K562 (cell line): ENCODE measurements at regions of chr19 and their contacts with region 1.

Region 1: DNA sequence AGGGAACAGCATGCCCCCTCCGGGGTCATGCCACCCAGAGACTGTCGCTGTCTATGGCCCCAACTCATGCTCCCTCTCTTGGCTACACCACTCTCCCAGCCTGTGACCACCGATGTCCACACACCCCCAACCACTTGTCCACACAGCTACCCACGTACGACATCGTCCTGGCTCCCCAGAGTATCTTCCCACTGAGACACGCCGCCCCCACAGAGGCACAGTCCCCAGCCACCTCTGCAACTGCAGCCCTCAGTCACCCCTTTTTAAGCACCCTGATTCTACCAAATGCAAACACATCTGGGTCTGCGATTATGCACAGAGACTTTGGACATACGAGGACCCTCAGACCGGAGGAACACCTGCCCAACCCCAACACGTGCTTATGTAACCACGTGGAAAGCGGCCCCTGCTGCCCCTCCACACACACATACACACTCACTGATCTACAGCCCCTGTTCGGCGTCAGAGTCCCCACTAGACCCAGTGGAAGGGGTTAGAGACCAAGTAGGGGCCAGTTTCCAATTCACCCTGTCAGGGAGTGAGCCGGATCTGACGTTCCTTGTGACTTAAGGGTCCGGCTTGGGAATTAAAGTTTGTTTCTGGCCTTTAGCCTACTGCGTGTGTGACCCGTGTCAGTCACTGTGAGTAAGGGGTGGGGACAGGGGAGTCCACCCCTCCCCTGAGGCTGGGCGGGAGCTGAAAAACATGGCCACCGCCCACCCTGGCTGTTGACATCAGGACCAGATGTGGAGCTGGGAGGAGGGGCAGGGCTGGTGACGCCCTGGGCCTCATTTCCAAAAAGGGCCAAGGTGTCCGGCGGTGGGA is 11.9 kb upstream of the AXL start:
- DNase-seq: peak; percentile 77 to 86 (median 84)
- ATAC-seq: peak; percentile 92
- H3K4me3 ChIP-seq: no peak overlapping the region
- H3K27ac ChIP-seq: peak overlapping the region; percentile 52
- H3K4me1 ChIP-seq: peaks cover 10 to 15% of the 10 kb centered on the region in 2 experiments; a peak in 4 of 5 replicates
- H3K27me3 ChIP-seq: peaks cover 0 to 4% of the 10 kb centered on the region in 2 experiments; a peak in 2 of 5 replicates
- CTCF ChIP-seq: no peak
- EP300 ChIP-seq: no peak
- POLR2A ChIP-seq: no peak; the same call in 1 of the 2 replicates
- RAD21 ChIP-seq: no peak

Region 2: GRCh38 chr19:41175801-41176777 is 31.0 kb before region 1 on chr19:
- CTCF ChIA-PET with region 1: no interaction called
- POLR2A ChIA-PET with region 1: no interaction called
- in situ Hi-C with region 1: no loop called
- intact Hi-C with region 1: no loop called
- DNase-seq: no peak
- ATAC-seq: no peak
- H3K4me3 ChIP-seq: no peak overlapping the region
- H3K27ac ChIP-seq: no peak overlapping the region
- H3K4me1 ChIP-seq: no peaks in the 10 kb centered on the region; a peak in 1 of 5 replicates
- H3K27me3 ChIP-seq: peaks cover 4 to 21% of the 10 kb centered on the region in 2 experiments; a peak in 4 of 5 replicates
- CTCF ChIP-seq: no peak
- EP300 ChIP-seq: no peak
- POLR2A ChIP-seq: no peak
- RAD21 ChIP-seq: no peak

Region 3: GRCh38 chr19:41189425-41190065 is 17.6 kb before region 1 on chr19:
- CTCF ChIA-PET with region 1: no interaction called
- POLR2A ChIA-PET with region 1: no interaction called
- in situ Hi-C with region 1: no loop called
- intact Hi-C with region 1: no loop called
- DNase-seq: no peak
- ATAC-seq: no peak
- H3K4me3 ChIP-seq: no peak overlapping the region
- H3K27ac ChIP-seq: no peak overlapping the region
- H3K4me1 ChIP-seq: peaks cover 5 to 13% of the 10 kb centered on the region in 2 experiments; a peak in 4 of 5 replicates
- H3K27me3 ChIP-seq: peaks cover 4 to 14% of the 10 kb centered on the region in 2 experiments; a peak in 2 of 5 replicates
- CTCF ChIP-seq: no peak
- EP300 ChIP-seq: no peak
- POLR2A ChIP-seq: no peak
- RAD21 ChIP-seq: no peak

Region 4: DNA sequence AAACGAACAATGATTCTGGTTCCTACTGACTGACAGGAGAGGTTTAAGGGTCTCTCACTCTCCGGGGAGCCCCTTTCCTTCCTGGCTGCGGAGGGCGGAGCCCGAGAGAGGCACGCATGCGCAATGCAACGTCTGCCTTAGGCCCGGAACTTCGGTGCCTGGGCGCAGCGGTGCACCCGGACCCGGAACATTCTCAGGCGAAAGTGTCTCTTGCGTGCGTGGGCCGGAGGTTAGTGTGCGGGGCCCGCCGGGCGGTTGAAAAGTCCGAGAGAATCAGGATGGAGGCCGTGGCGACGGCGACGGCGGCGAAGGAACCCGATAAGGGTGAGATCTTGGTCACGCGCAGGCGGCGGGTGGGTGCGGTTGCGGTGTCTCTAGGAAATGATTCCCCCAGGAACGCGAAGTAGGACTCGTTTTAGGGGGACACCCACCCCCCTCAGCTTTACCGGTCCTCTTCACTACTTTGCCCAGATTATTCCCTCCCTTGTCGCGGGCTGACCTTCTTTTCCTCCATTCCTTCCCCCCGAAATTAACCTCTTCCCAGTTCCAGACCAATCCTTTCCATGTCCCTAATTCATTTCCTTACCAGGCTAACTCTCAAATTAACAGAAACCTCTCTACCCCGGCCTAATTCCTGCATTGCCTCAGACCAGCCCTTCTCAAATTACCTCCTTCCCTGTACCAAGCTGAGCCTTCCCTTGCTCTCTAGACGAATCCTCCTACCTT is 103.1 kb after region 1 on chr19 and contains the start of gene CCDC97:
- CTCF ChIA-PET with region 1: interaction called, 13 read pairs
- POLR2A ChIA-PET with region 1: interaction called, 3 read pairs
- in situ Hi-C with region 1: no loop called
- intact Hi-C with region 1: loop called (anchors 5 kb)
- DNase-seq: peak; percentile 92 to 95 (median 94)
- ATAC-seq: peak; percentile 80
- H3K4me3 ChIP-seq: peak within 1 kb of the TSS; percentile 67
- H3K27ac ChIP-seq: peak within 1 kb of the TSS; percentile 88
- H3K4me1 ChIP-seq: peaks cover 11 to 12% of the 10 kb centered on the region in 2 experiments; a peak in 4 of 5 replicates
- H3K27me3 ChIP-seq: no peaks in the 10 kb centered on the region
- CTCF ChIP-seq: no peak
- EP300 ChIP-seq: peak; percentile 55
- POLR2A ChIP-seq: peak; percentile 92
- RAD21 ChIP-seq: no peak
- polyA plus RNA-seq, gene CCDC97: 0.60 to 0.79 TPM

Region 5: GRCh38 chr19:41570639-41571112 is 363.5 kb after region 1 on chr19:
- CTCF ChIA-PET with region 1: interaction called, 5 read pairs
- POLR2A ChIA-PET with region 1: no interaction called
- in situ Hi-C with region 1: loop called (anchors 10 kb)
- intact Hi-C with region 1: no loop called
- DNase-seq: peak; percentile 76 to 88 (median 80)
- ATAC-seq: peak; percentile 100
- H3K4me3 ChIP-seq: no peak overlapping the region
- H3K27ac ChIP-seq: no peak overlapping the region
- H3K4me1 ChIP-seq: no peaks in the 10 kb centered on the region
- H3K27me3 ChIP-seq: peaks cover 0 to 11% of the 10 kb centered on the region in 2 experiments; a peak in 1 of 5 replicates
- CTCF ChIP-seq: peak; percentile 90 to 92 (median 92)
- EP300 ChIP-seq: no peak
- POLR2A ChIP-seq: no peak
- RAD21 ChIP-seq: peak; percentile 75 to 86